K562 (cell line): ENCODE measurements at regions of chr1 and their contacts with region 1.

Region 1: DNA sequence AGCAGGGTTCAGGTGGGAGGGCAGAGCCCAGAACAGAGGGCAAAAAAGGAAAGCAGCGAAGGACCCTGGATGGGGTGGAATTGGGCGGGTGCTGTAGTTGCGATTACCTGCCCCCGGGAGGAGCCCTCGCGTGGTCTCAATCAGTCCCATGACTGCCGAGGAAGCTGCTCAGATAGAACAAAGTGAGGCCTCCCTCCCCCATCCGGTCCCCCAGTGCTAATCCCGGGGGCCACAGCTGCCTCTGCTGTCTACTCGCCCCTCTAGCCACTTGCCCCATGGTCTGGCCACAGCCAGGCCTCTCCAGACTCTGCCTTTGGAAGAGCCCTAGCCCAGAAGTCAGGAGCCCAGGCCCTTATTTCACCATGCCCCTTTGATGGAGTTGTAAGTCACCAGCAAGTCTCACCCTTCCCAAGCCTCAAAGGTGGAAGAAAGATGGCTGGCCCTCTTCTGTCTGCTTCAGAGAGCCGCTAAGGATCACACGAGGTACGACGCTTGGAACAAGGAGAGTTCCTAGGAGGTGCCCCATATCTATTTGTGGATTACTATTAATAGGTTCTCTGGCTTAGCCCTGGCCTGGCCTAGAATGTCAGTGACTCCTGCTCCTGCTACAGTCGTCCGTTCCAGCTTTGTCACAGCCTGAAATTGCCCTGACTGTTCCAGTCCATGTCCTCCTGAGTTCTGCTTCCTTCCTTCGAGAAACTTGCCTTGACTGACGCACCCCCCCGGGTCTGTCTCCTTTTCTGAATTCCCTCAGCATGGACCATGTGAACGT is 16.4 kb downstream of the ECHDC2 start:
- DNase-seq: peak; percentile 79 to 89 (median 80)
- ATAC-seq: peak; percentile 89
- H3K4me3 ChIP-seq: no peak overlapping the region
- H3K27ac ChIP-seq: peak overlapping the region; percentile 15; the same call in 1 of the 3 replicates
- H3K4me1 ChIP-seq: peaks cover 36 to 37% of the 10 kb centered on the region in 2 experiments
- H3K27me3 ChIP-seq: no peaks in the 10 kb centered on the region
- CTCF ChIP-seq: peak; percentile 75 to 80 (median 78)
- EP300 ChIP-seq: no peak
- POLR2A ChIP-seq: no peak
- RAD21 ChIP-seq: peak; percentile 72 to 82

Region 2: DNA sequence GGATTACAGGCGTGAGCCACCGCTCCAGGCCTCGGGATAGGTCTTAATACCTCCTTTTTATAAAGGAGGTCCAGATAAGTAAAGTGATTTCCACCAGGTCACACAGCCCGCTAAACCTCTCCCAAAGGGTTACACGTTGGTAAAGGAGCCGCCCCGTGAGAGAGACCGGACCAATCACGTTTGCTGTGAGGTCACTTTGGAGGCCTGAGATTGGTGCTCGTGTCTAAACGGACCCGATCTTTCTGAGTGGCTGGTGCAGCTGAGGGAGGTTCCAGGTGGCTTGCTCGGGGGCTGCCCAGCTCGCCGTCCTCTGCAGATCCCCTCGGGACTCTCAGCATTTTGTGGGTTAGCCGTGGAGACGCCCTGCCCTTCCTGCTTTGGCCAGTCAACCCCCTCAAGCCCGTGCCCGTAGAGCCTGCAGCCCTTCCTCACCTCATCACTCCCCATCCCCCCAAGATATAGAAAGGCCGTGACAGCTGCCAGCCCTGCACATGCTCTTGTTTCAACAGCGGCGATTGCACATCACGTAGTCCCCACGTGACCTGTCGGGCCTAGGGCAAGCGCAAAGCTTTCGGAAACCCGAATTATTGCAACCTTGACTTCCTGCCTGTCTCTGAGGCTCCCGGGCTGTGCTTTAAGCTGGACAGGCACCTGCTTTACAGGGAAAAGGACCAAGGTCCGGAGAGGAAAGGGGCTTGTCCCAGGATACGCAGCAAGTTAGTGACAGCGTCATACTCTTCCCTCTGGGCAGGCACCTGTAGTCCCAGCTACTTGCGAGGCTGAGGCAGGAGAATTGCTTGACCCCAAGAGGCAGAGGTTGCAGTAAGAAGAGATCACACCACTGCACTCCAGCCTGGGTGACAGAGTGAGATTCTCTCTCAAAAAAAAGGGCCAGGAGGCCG is 202.0 kb before region 1 on chr1:
- CTCF ChIA-PET with region 1: no interaction called
- POLR2A ChIA-PET with region 1: interaction called, 4 read pairs
- in situ Hi-C with region 1: no loop called
- intact Hi-C with region 1: loop called (anchors 5 kb)
- DNase-seq: peak; percentile 94 to 97 (median 95)
- ATAC-seq: peak; percentile 94
- H3K4me3 ChIP-seq: peak overlapping the region; percentile 26
- H3K27ac ChIP-seq: peak overlapping the region; percentile 61; the same call in 2 of the 3 replicates
- H3K4me1 ChIP-seq: peaks cover 9 to 13% of the 10 kb centered on the region in 2 experiments; a peak in 4 of 5 replicates
- H3K27me3 ChIP-seq: no peaks in the 10 kb centered on the region
- CTCF ChIP-seq: no peak
- EP300 ChIP-seq: peak; percentile 42; the same call in 1 of the 2 replicates
- POLR2A ChIP-seq: peak; percentile 71
- RAD21 ChIP-seq: no peak

Region 3: GRCh38 chr1:52892424-52893215 is 12.5 kb before region 1 on chr1:
- CTCF ChIA-PET with region 1: no interaction called
- POLR2A ChIA-PET with region 1: interaction called, 20 read pairs
- in situ Hi-C with region 1: no loop called
- intact Hi-C with region 1: no loop called
- DNase-seq: no peak
- ATAC-seq: no peak
- H3K4me3 ChIP-seq: no peak overlapping the region
- H3K27ac ChIP-seq: no peak overlapping the region
- H3K4me1 ChIP-seq: no peaks in the 10 kb centered on the region
- H3K27me3 ChIP-seq: no peaks in the 10 kb centered on the region
- CTCF ChIP-seq: no peak
- EP300 ChIP-seq: no peak
- POLR2A ChIP-seq: no peak
- RAD21 ChIP-seq: no peak

Region 4: GRCh38 chr1:52970149-52970548 is 65.0 kb after region 1 on chr1:
- CTCF ChIA-PET with region 1: no interaction called
- POLR2A ChIA-PET with region 1: no interaction called
- in situ Hi-C with region 1: no loop called
- intact Hi-C with region 1: loop called (anchors 1 kb)
- DNase-seq: peak in 2 of 4 experiments; percentile 27 to 51
- ATAC-seq: peak; percentile 98
- H3K4me3 ChIP-seq: no peak overlapping the region
- H3K27ac ChIP-seq: no peak overlapping the region
- H3K4me1 ChIP-seq: no peaks in the 10 kb centered on the region
- H3K27me3 ChIP-seq: no peaks in the 10 kb centered on the region
- CTCF ChIP-seq: peak; percentile 52 to 71 (median 54)
- EP300 ChIP-seq: no peak
- POLR2A ChIP-seq: no peak
- RAD21 ChIP-seq: peak; percentile 62 to 81

Region 5: GRCh38 chr1:53061859-53062707 is 157.0 kb after region 1 on chr1 and contains the start of gene PODN:
- CTCF ChIA-PET with region 1: no interaction called
- POLR2A ChIA-PET with region 1: interaction called, 3 read pairs
- in situ Hi-C with region 1: no loop called
- intact Hi-C with region 1: loop called (anchors 10 kb)
- DNase-seq: peak in 2 of 4 experiments; percentile 45 to 54
- ATAC-seq: no peak
- H3K4me3 ChIP-seq: no peak within 1 kb of the TSS
- H3K27ac ChIP-seq: no peak within 1 kb of the TSS
- H3K4me1 ChIP-seq: peaks cover 0 to 22% of the 10 kb centered on the region in 2 experiments; a peak in 2 of 5 replicates
- H3K27me3 ChIP-seq: peaks cover 37 to 51% of the 10 kb centered on the region in 2 experiments
- CTCF ChIP-seq: no peak
- EP300 ChIP-seq: no peak
- POLR2A ChIP-seq: no peak
- RAD21 ChIP-seq: no peak
- polyA plus RNA-seq, gene PODN: not detected

Region 6: GRCh38 chr1:53182111-53182593 is 277.0 kb after region 1 on chr1:
- CTCF ChIA-PET with region 1: interaction called, 8 read pairs
- POLR2A ChIA-PET with region 1: interaction called, 3 read pairs
- in situ Hi-C with region 1: loop called (anchors 25 kb)
- intact Hi-C with region 1: loop called (anchors 1 kb)
- DNase-seq: peak; percentile 84 to 93 (median 84)
- ATAC-seq: peak; percentile 81
- H3K4me3 ChIP-seq: no peak overlapping the region
- H3K27ac ChIP-seq: no peak overlapping the region
- H3K4me1 ChIP-seq: peaks cover 16 to 34% of the 10 kb centered on the region in 2 experiments
- H3K27me3 ChIP-seq: peaks cover 20 to 37% of the 10 kb centered on the region in 2 experiments; a peak in 4 of 5 replicates
- CTCF ChIP-seq: peak; percentile 85 to 95 (median 90)
- EP300 ChIP-seq: no peak
- POLR2A ChIP-seq: no peak
- RAD21 ChIP-seq: peak; percentile 47 to 78

Region 7: GRCh38 chr1:53196485-53197270 is 291.6 kb after region 1 on chr1 and contains the start of gene CPT2:
- CTCF ChIA-PET with region 1: no interaction called
- POLR2A ChIA-PET with region 1: no interaction called
- in situ Hi-C with region 1: loop called (anchors 25 kb)
- intact Hi-C with region 1: no loop called
- DNase-seq: peak; percentile 98 to 100 (median 100)
- ATAC-seq: peak; percentile 99
- H3K4me3 ChIP-seq: peak within 1 kb of the TSS; percentile 94
- H3K27ac ChIP-seq: peak within 1 kb of the TSS; percentile 90
- H3K4me1 ChIP-seq: peaks cover 16 to 21% of the 10 kb centered on the region in 2 experiments
- H3K27me3 ChIP-seq: no peaks in the 10 kb centered on the region
- CTCF ChIP-seq: peak in 1 of 3 experiments; percentile 22; a peak in 2 of 6 replicates
- EP300 ChIP-seq: peak; percentile 14; the same call in 1 of the 2 replicates
- POLR2A ChIP-seq: peak; percentile 95
- RAD21 ChIP-seq: peak in 1 of 2 experiments; percentile 4; a peak in 1 of 4 replicates
- polyA plus RNA-seq, gene CPT2: 7.6 to 7.9 TPM